Ascending aorta (tissue), 2 donors: ENCODE measurements at regions of chr21 and their contacts with region 1.

Region 1: DNA sequence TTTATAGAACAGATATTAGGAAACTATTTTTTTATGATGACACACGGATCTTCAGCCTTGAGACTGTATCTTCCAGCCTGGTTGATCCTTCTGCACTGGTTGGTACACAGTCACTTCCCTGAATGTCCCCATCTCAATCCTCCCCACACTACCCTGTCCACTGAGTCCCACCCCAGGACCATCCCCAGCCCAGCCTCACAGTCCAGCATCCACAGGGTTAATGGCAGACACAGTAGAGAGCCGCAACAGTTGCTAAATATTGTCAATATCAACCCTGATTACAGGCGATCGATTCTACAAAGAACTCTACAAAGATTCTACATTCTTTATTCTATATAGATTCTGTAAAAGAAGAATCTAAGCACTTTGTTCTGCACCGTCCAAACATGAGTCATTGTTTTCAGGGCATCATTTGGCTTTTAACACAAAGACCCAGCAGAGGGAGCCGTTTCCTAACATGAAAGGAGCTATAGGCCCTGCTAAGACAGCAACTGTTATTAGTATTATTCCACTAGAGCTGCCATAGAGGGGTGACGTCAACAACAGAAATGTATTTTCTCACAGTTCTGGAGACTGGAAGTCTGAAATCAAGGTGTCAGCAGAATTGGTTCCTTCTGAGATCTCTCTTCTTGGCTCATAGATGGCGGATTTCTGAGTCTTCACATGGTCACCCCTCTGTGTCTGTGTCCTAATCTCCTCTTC is 30.1 kb upstream of the IFNAR2 start:
- DNase-seq: peak in 1 of 2 donors; percentile 93
- H3K4me3 ChIP-seq: no peak overlapping the region
- H3K27ac ChIP-seq: no peak overlapping the region
- H3K4me1 ChIP-seq: peaks cover 2 to 6% of the 10 kb centered on the region in 2 donors
- H3K27me3 ChIP-seq: no peaks in the 10 kb centered on the region
- CTCF ChIP-seq: peak; percentile 60 to 85 (median 75)

Region 2: DNA sequence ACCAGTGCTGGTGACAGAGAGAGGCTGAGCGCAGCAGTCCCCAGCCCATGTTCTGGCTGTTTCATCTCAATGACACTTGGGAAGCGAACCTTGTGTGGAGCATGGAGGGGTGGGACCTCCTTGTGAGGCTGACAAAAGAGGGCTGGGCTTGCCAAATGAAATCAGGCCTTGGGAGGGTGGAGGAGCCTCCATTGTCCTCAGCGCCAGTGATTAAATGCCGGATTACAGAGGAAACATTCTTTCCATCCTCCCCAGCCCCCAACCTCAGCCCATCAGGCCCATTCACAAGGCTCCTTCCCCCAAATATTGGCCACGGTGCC is 364.8 kb before region 1 on chr21:
- intact Hi-C with region 1: loop called (anchors 2 kb)
- DNase-seq: no peak
- H3K4me3 ChIP-seq: no peak overlapping the region
- H3K27ac ChIP-seq: no peak overlapping the region
- H3K4me1 ChIP-seq: no peaks in the 10 kb centered on the region
- H3K27me3 ChIP-seq: no peaks in the 10 kb centered on the region
- CTCF ChIP-seq: no peak

Region 3: DNA sequence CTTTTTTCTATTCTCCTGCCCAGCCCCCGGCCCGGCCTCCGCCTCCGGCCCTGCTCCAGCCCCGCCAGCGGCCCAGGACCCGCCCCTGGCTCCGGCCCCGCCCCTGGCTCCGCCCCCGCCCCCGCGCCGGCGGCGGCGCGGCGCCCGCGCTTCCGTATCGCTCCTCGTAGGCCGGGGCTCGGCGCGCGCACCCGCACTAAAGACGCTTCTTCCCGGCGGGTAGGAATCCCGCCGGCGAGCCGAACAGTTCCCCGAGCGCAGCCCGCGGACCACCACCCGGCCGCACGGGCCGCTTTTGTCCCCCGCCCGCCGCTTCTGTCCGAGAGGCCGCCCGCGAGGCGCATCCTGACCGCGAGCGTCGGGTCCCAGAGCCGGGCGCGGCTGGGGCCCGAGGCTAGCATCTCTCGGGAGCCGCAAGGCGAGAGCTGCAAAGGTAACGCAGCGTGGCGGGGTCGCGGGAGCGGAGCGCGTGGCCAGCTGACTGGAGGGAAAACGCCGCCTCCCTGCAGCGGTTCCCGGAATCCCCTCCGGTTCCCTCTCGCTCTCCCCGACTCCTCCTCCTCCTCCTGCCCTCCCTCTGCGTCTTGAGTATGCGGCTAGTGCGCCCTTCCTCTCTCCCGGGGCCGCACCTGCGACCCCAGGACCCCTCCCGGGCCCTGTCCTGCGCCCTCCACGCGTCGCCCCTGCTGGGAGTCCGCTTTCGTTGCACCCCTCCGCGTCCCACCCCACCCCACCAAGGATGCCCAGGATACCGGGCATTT is 30.3 kb after region 1 on chr21 and contains the start of gene IFNAR2:
- intact Hi-C with region 1: loop called (anchors 1 kb)
- DNase-seq: peak in 1 of 2 donors; percentile 86
- H3K4me3 ChIP-seq: peak within 1 kb of the TSS; percentile 95 to 100
- H3K27ac ChIP-seq: peak within 1 kb of the TSS; percentile 99
- H3K4me1 ChIP-seq: peaks cover 0 to 23% of the 10 kb centered on the region in 2 donors
- H3K27me3 ChIP-seq: no peaks in the 10 kb centered on the region
- CTCF ChIP-seq: no peak
- total RNA-seq, gene IFNAR2: 30.3 TPM

Region 4: DNA sequence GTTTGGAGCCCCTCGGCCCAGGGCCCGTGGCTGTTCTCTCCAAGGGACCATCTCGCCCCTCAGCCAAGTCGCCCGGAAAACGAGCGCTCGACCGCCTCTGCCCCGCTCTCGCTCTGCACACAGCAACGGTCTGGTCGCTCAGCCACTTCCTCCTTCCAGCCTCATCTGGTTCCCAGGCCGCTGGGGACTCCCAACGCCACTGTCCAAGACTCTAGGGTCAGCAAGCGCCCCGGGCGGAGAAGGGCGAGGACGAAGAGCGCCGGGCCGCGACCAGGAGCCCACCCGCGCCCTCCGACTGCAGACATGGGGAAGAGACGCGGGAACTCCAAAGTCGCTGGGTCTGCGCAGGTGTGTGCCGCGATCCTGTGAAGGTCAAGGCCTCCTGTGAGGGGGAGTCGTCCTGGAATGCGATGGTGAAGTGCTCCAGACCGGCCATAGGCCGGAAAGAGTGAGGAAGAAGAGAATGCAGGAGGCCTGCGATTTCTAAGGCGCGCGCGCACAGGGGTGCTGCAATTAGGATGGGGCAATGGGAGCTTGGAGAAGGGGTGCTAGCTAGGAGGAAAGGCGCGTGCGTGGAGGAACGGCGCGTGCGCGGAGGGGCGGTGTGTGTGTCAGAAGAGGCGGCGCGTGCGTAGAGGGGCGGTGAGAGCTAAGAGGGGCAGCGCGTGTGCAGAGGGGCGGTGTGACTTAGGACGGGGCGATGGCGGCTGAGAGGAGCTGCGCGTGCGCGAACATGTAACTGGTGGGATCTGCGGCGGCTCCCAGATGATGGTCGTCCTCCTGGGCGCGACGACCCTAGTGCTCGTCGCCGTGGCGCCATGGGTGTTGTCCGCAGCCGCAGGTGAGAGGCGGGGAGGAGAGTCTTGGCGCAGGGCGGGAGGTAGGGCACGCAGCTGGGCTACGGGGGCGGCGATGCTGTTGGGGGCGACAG is 124.9 kb after region 1 on chr21 and contains the start of gene IFNAR1:
- intact Hi-C with region 1: loop called (anchors 1 kb)
- DNase-seq: peak; percentile 95 to 99
- H3K4me3 ChIP-seq: peak within 1 kb of the TSS; percentile 81 to 98
- H3K27ac ChIP-seq: peak within 1 kb of the TSS; percentile 94 to 98
- H3K4me1 ChIP-seq: peaks cover 2 to 22% of the 10 kb centered on the region in 2 donors
- H3K27me3 ChIP-seq: no peaks in the 10 kb centered on the region
- CTCF ChIP-seq: no peak
- total RNA-seq, gene IFNAR1: 25.9 TPM

Region 5: DNA sequence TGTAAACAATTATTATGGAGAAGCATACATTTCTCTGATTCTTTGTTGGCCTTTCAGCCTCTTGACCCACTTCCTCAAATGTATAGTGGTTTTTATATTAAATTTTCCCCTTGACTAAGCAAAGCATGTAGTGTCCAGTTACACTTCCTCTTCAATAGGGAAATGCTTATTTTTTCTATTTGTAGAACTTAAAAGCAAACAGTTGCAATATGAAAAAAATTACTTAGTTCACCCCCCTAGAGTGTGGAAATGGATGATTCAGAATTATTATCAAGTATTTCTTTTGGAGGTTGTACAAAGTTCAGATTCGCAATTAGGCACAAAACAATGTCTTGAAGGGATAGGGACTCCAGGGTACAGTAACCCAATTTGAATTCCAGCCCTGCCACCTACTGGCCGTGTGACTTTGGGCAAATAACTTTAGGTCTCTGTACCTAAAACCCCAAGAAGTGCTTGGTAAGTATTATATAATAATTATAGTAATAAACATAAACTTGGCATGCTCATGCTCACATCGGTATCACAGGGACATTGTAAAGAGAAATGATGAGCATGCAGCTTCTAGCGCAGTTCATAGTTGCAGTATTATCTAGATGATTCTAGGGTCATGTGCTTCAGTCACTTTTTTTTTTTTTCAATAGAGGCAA is 174.9 kb after region 1 on chr21:
- intact Hi-C with region 1: loop called (anchors 5 kb)
- DNase-seq: no peak
- H3K4me3 ChIP-seq: no peak overlapping the region
- H3K27ac ChIP-seq: no peak overlapping the region
- H3K4me1 ChIP-seq: peaks cover 0 to 7% of the 10 kb centered on the region in 2 donors
- H3K27me3 ChIP-seq: no peaks in the 10 kb centered on the region
- CTCF ChIP-seq: peak; percentile 19 to 51 (median 49)